ENCODE measurements at regions of chr12 and their contacts with region 1.

Region 1: GRCh38 chr12:32312049-32312670 is 87.2 kb upstream of the FGD4 start:
- DNase-seq: peak; percentile 55
- ATAC-seq: peak; percentile 86
- H3K4me3 ChIP-seq: no peak overlapping the region
- H3K27ac ChIP-seq: no peak overlapping the region
- H3K4me1 ChIP-seq: no peaks in the 10 kb centered on the region
- H3K27me3 ChIP-seq: no peaks in the 10 kb centered on the region
- CTCF ChIP-seq: peak; percentile 48 to 96 (median 66)
- POLR2A ChIP-seq: no peak
- RAD21 ChIP-seq: peak; percentile 63

Region 2: DNA sequence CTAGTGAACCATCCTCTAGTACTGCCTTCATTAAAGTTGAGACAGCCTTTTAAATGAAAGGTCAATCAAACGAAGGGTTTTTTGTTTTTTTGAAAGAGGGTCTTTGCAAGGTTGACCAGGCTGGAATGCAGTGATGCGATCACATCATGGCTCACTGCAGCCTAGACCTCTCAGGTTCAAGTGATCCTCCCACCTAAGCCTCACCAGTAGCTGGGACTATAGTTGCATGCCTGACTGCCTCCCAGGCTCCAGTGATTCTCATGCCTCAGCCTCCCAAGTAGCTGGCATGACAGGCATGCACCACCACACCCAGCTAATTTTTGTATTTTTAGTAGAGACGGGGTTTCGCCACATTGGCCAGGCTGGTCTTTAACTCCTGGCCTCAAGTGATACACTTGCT is 871.6 kb before region 1 on chr12:
- CTCF ChIA-PET with region 1: no interaction called
- POLR2A ChIA-PET with region 1: no interaction called
- RAD21 ChIA-PET with region 1: no interaction called
- intact Hi-C with region 1: no loop called
- DNase-seq: no peak
- ATAC-seq: no peak
- H3K4me3 ChIP-seq: no peak overlapping the region
- H3K27ac ChIP-seq: no peak overlapping the region
- H3K4me1 ChIP-seq: no peaks in the 10 kb centered on the region
- H3K27me3 ChIP-seq: no peaks in the 10 kb centered on the region
- CTCF ChIP-seq: no peak
- POLR2A ChIP-seq: no peak
- RAD21 ChIP-seq: no peak

Region 3: DNA sequence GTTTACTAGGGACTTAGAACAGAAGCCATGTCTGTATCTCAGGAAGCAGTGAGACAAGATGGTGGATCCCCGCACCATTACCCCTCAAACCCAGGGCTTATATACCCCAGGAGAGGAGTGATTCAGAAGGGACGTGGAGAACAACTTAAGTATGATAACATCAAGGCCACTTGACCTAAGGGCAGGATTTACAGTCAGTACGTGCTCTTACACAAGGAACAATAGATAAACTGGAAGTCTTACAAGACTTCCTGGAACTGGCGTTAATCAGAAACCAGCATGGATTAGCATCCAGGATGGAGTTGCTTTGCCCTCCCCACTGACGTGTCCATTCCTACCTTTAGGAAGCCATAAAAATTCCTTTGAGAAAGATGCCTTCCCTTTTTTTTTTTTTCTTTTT is 661.2 kb before region 1 on chr12:
- CTCF ChIA-PET with region 1: interaction called, 48 read pairs
- POLR2A ChIA-PET with region 1: interaction called, 3 read pairs
- RAD21 ChIA-PET with region 1: interaction called, 4 to 6 read pairs
- intact Hi-C with region 1: loop called (anchors 1 kb)
- DNase-seq: no peak
- ATAC-seq: no peak
- H3K4me3 ChIP-seq: no peak overlapping the region
- H3K27ac ChIP-seq: no peak overlapping the region
- H3K4me1 ChIP-seq: peaks cover 0 to 8% of the 10 kb centered on the region in 2 experiments; a peak in 2 of 4 replicates
- H3K27me3 ChIP-seq: no peaks in the 10 kb centered on the region
- CTCF ChIP-seq: no peak
- POLR2A ChIP-seq: no peak
- RAD21 ChIP-seq: no peak

Region 4: DNA sequence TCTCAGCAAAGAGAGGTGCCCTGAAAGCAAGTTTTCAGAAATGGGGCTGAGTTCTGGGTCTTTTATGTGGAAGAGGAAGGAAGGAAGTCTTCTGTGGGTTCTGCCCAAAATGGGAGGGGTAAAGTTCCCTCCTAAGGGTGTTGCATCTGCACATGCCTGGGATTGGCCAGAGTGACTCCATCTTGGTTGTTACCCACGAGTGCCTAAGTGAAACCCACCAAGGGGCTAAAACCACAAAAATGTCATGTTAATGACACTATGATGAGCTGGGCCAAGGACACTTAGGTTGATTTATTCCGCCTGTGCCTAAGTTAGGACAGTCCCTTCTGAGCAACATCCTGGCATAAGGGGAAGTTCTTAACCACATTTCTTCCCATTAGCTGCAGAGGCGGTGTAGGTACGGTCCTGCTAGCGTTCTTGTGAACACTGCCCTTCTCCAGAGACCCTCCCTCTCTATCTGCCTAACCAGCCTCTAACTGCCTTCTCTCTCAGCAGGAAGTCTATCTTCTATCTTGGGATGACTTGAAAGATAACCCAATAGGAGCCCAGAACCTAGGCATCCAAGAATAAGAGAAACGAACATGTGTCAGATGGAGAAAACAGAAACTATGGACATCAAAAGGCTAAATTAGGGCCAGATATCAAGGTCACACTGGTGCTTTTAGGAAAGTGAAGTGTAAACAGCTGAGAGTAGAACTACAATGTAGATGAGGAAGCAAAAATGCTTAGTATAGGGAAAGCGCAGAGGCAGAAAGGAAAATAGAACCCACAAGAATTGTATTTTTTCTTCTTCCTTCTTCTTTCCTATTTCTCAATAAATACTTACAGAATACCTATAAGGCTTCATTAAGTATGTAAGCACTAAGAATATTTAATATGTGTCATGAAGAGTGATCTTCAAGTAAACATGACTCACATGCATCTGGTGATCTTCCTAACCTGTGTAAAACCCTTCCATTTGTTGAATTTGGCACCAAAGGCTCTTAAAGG is 479.1 kb before region 1 on chr12:
- CTCF ChIA-PET with region 1: no interaction called
- POLR2A ChIA-PET with region 1: no interaction called
- RAD21 ChIA-PET with region 1: no interaction called
- intact Hi-C with region 1: no loop called
- DNase-seq: no peak
- ATAC-seq: no peak
- H3K4me3 ChIP-seq: no peak overlapping the region
- H3K27ac ChIP-seq: no peak overlapping the region
- H3K4me1 ChIP-seq: peaks cover 7% of the 10 kb centered on the region in 2 experiments; a peak in 2 of 4 replicates
- H3K27me3 ChIP-seq: no peaks in the 10 kb centered on the region
- CTCF ChIP-seq: no peak
- POLR2A ChIP-seq: no peak
- RAD21 ChIP-seq: no peak